ENCODE measurements at regions of chr10 and their contacts with region 1.

Region 1: GRCh38 chr10:95363303-95363912 is 72.6 kb upstream of the PDLIM1 start:
- DNase-seq: no peak
- H3K4me3 ChIP-seq: no peak overlapping the region
- CTCF ChIP-seq: peak; percentile 69

Region 2: GRCh38 chr10:95133016-95133752 is 230.2 kb before region 1 on chr10:
- CTCF ChIA-PET with region 1: interaction called, 27 read pairs
- POLR2A ChIA-PET with region 1: no interaction called
- DNase-seq: peak; percentile 19
- H3K4me3 ChIP-seq: no peak overlapping the region
- CTCF ChIP-seq: peak; percentile 79

Region 3: DNA sequence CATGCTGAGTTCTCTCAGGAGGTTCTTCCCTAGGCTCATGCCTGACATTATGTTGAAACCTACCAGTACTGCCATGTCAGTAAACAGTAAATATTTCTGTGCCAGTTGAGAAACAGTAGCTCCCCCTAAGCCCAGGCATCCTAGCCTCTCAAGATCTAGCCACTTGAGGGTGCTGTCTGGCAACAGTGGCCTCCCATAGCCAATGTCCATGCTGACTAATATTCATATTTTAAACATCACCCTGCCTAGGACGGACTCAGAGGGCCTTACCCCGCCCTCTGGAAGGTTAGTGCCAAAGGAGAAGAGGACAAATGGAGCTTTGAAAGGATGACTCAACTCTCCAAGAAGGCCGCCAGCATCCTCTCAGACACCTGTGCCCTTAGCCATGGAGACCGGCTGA is 161.7 kb before region 1 on chr10:
- CTCF ChIA-PET with region 1: interaction called, 75 read pairs
- POLR2A ChIA-PET with region 1: no interaction called
- DNase-seq: no peak
- H3K4me3 ChIP-seq: no peak overlapping the region
- CTCF ChIP-seq: peak; percentile 29

Region 4: GRCh38 chr10:95214793-95215192 is 148.6 kb before region 1 on chr10:
- CTCF ChIA-PET with region 1: interaction called, 24 read pairs
- POLR2A ChIA-PET with region 1: no interaction called
- DNase-seq: no peak
- H3K4me3 ChIP-seq: no peak overlapping the region
- CTCF ChIP-seq: no peak

Region 5: DNA sequence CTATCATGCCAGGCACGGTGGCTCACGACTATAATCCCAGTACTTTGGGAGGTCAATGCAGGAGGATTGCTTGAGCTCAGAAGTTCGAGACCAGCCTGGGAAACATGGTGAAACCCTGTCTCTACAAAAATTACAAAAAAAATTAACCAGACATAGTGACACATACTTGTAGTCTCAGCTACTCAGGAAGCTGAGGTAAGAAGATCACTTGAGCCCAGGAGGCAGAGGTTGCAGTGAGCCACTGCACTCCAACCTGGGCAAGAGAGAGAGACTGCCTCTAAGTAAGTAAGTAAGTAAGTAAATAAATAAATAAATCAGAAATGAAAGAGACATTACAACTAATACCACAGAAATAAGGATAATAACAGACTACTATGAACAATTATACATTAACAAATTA is 108.8 kb before region 1 on chr10:
- CTCF ChIA-PET with region 1: interaction called, 16 read pairs
- POLR2A ChIA-PET with region 1: no interaction called
- DNase-seq: no peak
- H3K4me3 ChIP-seq: no peak overlapping the region
- CTCF ChIP-seq: no peak

Region 6: GRCh38 chr10:95295031-95295755 is 68.2 kb before region 1 on chr10:
- CTCF ChIA-PET with region 1: no interaction called
- POLR2A ChIA-PET with region 1: no interaction called
- DNase-seq: no peak
- H3K4me3 ChIP-seq: peak overlapping the region; percentile 48
- CTCF ChIP-seq: no peak

Region 7: GRCh38 chr10:95341716-95342130 is 21.7 kb before region 1 on chr10:
- CTCF ChIA-PET with region 1: interaction called, 118 read pairs
- POLR2A ChIA-PET with region 1: no interaction called
- DNase-seq: peak; percentile 24
- H3K4me3 ChIP-seq: no peak overlapping the region
- CTCF ChIP-seq: no peak

Region 8: DNA sequence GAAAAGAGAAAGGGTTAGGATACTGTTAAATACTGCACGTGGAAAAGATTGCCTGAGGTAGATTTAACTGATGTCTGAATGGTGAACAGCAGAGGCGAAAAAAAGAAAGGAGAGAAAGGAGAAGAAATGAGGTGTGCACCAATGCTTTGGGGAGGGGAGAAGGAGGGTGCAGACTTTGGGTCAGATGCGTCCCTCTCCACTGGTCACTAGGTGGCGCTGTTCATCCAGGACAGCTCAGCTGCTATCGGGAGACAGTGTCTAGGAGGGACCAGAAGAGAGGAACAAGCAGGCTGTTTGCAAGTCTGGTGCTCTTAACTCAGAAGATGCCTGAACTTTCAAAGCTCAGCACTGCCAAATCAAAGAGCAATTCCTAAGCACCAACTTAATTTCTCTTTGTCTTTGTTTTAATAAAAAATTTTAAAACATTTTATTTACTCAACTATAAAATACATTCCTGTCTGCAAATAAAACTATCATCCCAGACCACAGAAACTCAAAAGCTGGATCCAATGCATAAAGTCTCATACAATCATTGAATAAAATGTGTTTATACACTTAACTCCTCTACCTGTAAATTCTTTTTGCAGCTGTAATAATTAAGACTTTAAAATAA is 11.3 kb after region 1 on chr10:
- CTCF ChIA-PET with region 1: interaction called, 139 read pairs
- POLR2A ChIA-PET with region 1: no interaction called
- DNase-seq: no peak
- H3K4me3 ChIP-seq: no peak overlapping the region
- CTCF ChIP-seq: peak; percentile 88

Region 9: GRCh38 chr10:95459446-95460045 is 96.1 kb after region 1 on chr10:
- CTCF ChIA-PET with region 1: no interaction called
- POLR2A ChIA-PET with region 1: no interaction called
- DNase-seq: no peak
- H3K4me3 ChIP-seq: no peak overlapping the region
- CTCF ChIP-seq: no peak

Region 10: DNA sequence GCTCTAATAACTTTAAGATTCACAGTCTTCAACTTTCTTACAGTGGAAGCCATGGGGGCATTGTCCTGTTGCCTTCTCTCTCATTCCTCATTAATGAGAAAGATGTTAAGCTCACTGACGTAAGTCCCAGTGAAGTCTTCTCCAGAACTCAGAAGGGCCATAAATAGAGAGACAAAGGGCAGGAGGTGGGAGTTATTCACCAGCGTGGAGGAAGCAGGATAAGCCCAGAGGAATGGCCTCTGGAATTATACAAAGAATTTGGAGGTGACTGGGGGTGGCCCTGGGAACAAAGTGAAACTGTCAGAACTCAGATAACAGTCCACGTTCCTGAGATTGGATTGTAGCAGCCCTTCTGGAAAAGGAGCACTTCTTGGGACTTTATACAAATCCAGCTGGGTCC is 145.3 kb after region 1 on chr10:
- CTCF ChIA-PET with region 1: no interaction called
- POLR2A ChIA-PET with region 1: no interaction called
- DNase-seq: no peak
- H3K4me3 ChIP-seq: no peak overlapping the region
- CTCF ChIP-seq: no peak

Measured in AG04449 (cell line).